ENCODE measurements at regions of chr3 and their contacts with region 1.

Region 1: DNA sequence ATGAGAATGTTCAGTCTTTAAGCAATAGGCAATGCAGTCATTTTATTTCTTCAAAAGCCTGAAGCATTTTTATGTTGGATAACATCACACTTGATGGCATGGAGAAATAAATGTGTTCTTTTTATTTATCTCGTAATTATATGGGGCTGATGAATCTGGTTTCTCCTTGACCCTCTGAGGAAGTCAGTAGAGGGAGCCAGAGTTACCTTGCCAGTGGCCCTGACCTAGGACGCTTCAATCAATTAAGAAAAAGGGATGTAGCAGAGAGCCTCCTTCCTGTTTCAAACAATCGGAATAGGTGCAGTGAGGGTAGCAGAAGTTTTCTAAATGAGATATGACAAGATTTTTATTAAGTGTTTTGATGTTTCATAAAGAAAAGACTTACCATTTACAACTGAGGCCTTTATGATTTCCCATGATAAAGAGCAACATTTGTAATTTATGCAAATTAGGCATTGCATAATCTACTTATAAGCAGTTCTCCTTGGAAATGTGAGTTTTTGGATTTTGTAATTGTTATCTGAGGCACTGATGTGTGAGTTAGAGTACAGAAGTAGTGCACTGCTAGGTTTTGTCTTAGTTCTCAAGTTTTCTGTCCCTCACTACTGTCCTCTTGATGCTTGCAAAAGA is 129.1 kb downstream of the RAP2B start:
- DNase-seq: peak in 1 of 9 donors; percentile 14
- ATAC-seq: peak; percentile 66
- H3K4me3 ChIP-seq: no peak overlapping the region
- H3K4me3 Mint-ChIP-seq: no peak overlapping the region
- H3K27ac ChIP-seq: no peak overlapping the region
- H3K27ac Mint-ChIP-seq: peak overlapping the region in 4 of 9 donors; percentile 19 to 59 (median 41)
- H3K4me1 ChIP-seq: peaks cover 9 to 19% of the 10 kb centered on the region in 2 donors
- H3K4me1 Mint-ChIP-seq: peaks cover 26 to 48% (median 46%) of the 10 kb centered on the region in 7 donors
- H3K27me3 ChIP-seq: no peaks in the 10 kb centered on the region
- H3K27me3 Mint-ChIP-seq: no peaks in the 10 kb centered on the region

Region 2: GRCh38 chr3:153090973-153091372 is 200.2 kb before region 1 on chr3:
- CTCF ChIA-PET with region 1: no interaction called
- POLR2A ChIA-PET with region 1: no interaction called
- intact Hi-C with region 1: loop called in 1 of 2 experiments (anchors 5 kb)
- DNase-seq: peak in 7 of 9 donors; percentile 11 to 73 (median 64)
- ATAC-seq: peak; percentile 70
- H3K4me3 ChIP-seq: no peak overlapping the region
- H3K4me3 Mint-ChIP-seq: peak overlapping the region; percentile 9 to 79 (median 51)
- H3K27ac ChIP-seq: no peak overlapping the region
- H3K27ac Mint-ChIP-seq: peak overlapping the region; percentile 40 to 91 (median 83)
- H3K4me1 ChIP-seq: peaks cover 5 to 15% of the 10 kb centered on the region in 2 donors
- H3K4me1 Mint-ChIP-seq: peaks cover 8 to 37% (median 26%) of the 10 kb centered on the region in 7 donors
- H3K27me3 ChIP-seq: no peaks in the 10 kb centered on the region
- H3K27me3 Mint-ChIP-seq: peaks cover 0 to 12% (median 0%) of the 10 kb centered on the region in 5 donors

Region 3: DNA sequence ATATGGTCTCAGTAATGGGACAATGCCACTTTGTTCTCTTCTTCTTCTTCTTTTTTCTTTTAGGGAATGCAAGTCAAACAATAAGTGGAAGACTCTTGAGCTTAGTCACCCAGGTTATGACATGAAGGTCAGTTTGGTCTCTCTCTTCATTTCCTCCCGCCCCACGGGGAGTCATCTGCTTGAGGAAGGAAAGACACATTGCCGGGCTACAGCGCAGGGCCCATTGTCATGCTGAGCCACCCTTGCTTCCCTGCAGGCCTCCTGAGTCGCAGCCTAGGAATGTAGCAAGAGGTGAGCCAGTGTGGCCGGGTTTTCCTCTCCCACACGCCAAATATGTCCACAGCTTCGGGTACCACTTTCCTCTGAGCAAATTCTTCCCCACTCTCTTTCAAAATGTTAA is 81.6 kb before region 1 on chr3:
- CTCF ChIA-PET with region 1: interaction called, 17 read pairs
- POLR2A ChIA-PET with region 1: no interaction called
- intact Hi-C with region 1: loop called in 1 of 2 experiments (anchors 1 kb)
- DNase-seq: no peak
- ATAC-seq: peak; percentile 85
- H3K4me3 ChIP-seq: no peak overlapping the region
- H3K4me3 Mint-ChIP-seq: peak overlapping the region in 9 of 10 donors; percentile 20 to 80 (median 72)
- H3K27ac ChIP-seq: no peak overlapping the region
- H3K27ac Mint-ChIP-seq: peak overlapping the region in 7 of 9 donors; percentile 0 to 87 (median 71)
- H3K4me1 ChIP-seq: peaks cover 6 to 14% of the 10 kb centered on the region in 2 donors
- H3K4me1 Mint-ChIP-seq: peaks cover 15 to 60% (median 45%) of the 10 kb centered on the region in 7 donors
- H3K27me3 ChIP-seq: no peaks in the 10 kb centered on the region
- H3K27me3 Mint-ChIP-seq: peaks cover 0 to 1% (median 0%) of the 10 kb centered on the region in 5 donors

Region 4: DNA sequence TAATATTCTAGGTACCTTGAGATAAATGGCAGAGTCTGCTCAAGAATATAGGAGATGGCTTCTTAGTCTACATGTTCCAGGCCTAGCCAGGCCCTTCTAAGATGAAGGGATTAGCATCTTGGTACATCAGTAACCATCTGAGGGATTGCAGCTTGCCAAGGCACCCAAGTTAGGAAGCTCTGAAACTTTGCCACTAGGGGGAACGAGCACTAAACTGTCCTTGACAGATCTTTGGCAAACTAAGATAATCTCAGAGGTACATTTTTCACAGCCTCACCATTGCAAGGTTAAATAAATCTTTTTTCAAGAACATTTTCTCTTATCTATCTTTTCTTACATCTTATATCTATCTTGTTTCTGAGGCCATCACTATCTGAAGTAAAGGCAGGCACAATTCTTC is 222.1 kb after region 1 on chr3:
- CTCF ChIA-PET with region 1: no interaction called
- POLR2A ChIA-PET with region 1: interaction called, 3 read pairs
- intact Hi-C with region 1: loop called in 1 of 2 experiments (anchors 5 kb)
- DNase-seq: peak in 5 of 9 donors; percentile 19 to 25 (median 21)
- ATAC-seq: peak; percentile 38
- H3K4me3 ChIP-seq: no peak overlapping the region
- H3K4me3 Mint-ChIP-seq: no peak overlapping the region
- H3K27ac ChIP-seq: no peak overlapping the region
- H3K27ac Mint-ChIP-seq: no peak overlapping the region
- H3K4me1 ChIP-seq: no peaks in the 10 kb centered on the region
- H3K4me1 Mint-ChIP-seq: no peaks in the 10 kb centered on the region
- H3K27me3 ChIP-seq: no peaks in the 10 kb centered on the region
- H3K27me3 Mint-ChIP-seq: no peaks in the 10 kb centered on the region

Region 5: GRCh38 chr3:153768561-153769469 is 477.6 kb after region 1 on chr3:
- CTCF ChIA-PET with region 1: interaction called, 13 read pairs
- POLR2A ChIA-PET with region 1: interaction called, 3 read pairs
- intact Hi-C with region 1: loop called (anchors 1 kb)
- DNase-seq: peak; percentile 12 to 67 (median 59)
- ATAC-seq: peak; percentile 96
- H3K4me3 ChIP-seq: no peak overlapping the region
- H3K4me3 Mint-ChIP-seq: no peak overlapping the region
- H3K27ac ChIP-seq: no peak overlapping the region
- H3K27ac Mint-ChIP-seq: peak overlapping the region in 1 of 9 donors; percentile 74
- H3K4me1 ChIP-seq: no peaks in the 10 kb centered on the region
- H3K4me1 Mint-ChIP-seq: peaks cover 0 to 12% (median 0%) of the 10 kb centered on the region in 7 donors
- H3K27me3 ChIP-seq: no peaks in the 10 kb centered on the region
- H3K27me3 Mint-ChIP-seq: peaks cover 6 to 28% (median 11%) of the 10 kb centered on the region in 5 donors

Region 6: DNA sequence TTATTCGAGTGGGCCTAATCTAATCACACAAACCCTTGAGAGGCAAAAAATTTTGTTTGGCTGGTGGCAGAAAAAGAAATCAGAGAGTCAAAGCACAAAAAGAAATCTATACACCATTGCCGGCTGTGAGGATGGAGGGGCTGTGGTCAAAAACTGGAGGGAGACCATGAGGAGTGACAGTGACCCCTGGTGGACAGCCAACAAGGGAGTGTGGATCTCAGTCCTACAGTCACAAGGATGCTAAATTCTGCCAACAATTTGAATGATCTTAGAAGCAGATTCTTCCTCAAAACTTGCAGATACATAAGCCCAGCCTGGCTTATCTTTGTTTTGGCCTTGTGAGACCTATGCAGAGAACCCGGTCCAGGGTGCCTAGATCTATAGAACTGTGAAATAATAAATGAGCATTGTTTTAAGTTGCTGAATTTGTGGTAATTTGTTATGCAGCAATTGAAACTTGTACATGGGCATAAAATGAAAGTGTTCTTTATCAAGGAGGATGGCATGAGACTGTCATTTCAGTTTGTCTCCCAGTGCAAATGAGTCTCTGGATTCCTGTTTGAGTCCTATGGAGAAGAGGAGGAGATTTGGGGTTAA is 727.0 kb after region 1 on chr3:
- CTCF ChIA-PET with region 1: no interaction called
- POLR2A ChIA-PET with region 1: no interaction called
- intact Hi-C with region 1: loop called in 1 of 2 experiments (anchors 1 kb)
- DNase-seq: peak in 6 of 9 donors; percentile 4 to 21 (median 14)
- ATAC-seq: no peak
- H3K4me3 ChIP-seq: no peak overlapping the region
- H3K4me3 Mint-ChIP-seq: no peak overlapping the region
- H3K27ac ChIP-seq: no peak overlapping the region
- H3K27ac Mint-ChIP-seq: no peak overlapping the region
- H3K4me1 ChIP-seq: no peaks in the 10 kb centered on the region
- H3K4me1 Mint-ChIP-seq: no peaks in the 10 kb centered on the region
- H3K27me3 ChIP-seq: no peaks in the 10 kb centered on the region
- H3K27me3 Mint-ChIP-seq: peaks cover 0 to 13% (median 4%) of the 10 kb centered on the region in 5 donors

Region 7: DNA sequence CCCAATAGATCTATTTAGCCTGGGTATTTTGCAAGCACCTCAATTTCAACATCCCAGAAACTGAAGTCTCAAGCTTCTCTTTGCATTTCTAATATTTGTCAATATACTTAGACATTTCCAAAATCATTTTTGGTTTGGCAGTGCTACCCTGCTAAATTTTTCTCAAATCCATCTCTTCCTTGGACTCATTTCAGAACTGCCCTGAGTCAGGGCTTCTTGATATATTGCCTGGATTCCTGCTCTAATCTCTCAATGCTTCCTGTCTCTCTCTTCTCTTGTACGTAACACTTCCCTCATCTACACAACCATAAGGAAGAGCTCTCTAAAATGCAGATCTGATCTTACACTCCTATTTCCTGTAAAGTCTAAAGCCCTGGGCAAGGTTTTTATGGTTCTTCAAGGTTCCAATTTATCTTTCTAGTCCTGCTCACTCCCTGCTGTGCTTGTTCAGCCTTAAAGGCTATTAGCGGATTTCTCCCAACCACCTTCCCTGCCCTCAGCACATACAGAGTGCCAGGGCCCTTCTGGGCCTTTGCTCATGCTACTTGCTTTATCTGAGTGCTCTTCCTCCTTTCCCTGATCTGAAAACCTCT is 1735.9 kb after region 1 on chr3:
- CTCF ChIA-PET with region 1: no interaction called
- POLR2A ChIA-PET with region 1: no interaction called
- intact Hi-C with region 1: no loop called
- DNase-seq: no peak
- ATAC-seq: peak; percentile 37
- H3K4me3 ChIP-seq: no peak overlapping the region
- H3K4me3 Mint-ChIP-seq: no peak overlapping the region
- H3K27ac ChIP-seq: no peak overlapping the region
- H3K27ac Mint-ChIP-seq: no peak overlapping the region
- H3K4me1 ChIP-seq: no peaks in the 10 kb centered on the region
- H3K4me1 Mint-ChIP-seq: peaks cover 0 to 2% (median 0%) of the 10 kb centered on the region in 7 donors
- H3K27me3 ChIP-seq: no peaks in the 10 kb centered on the region
- H3K27me3 Mint-ChIP-seq: peaks cover 0 to 7% (median 0%) of the 10 kb centered on the region in 5 donors